ENCODE measurements at regions of chr7 and their contacts with region 1.

Region 1: DNA sequence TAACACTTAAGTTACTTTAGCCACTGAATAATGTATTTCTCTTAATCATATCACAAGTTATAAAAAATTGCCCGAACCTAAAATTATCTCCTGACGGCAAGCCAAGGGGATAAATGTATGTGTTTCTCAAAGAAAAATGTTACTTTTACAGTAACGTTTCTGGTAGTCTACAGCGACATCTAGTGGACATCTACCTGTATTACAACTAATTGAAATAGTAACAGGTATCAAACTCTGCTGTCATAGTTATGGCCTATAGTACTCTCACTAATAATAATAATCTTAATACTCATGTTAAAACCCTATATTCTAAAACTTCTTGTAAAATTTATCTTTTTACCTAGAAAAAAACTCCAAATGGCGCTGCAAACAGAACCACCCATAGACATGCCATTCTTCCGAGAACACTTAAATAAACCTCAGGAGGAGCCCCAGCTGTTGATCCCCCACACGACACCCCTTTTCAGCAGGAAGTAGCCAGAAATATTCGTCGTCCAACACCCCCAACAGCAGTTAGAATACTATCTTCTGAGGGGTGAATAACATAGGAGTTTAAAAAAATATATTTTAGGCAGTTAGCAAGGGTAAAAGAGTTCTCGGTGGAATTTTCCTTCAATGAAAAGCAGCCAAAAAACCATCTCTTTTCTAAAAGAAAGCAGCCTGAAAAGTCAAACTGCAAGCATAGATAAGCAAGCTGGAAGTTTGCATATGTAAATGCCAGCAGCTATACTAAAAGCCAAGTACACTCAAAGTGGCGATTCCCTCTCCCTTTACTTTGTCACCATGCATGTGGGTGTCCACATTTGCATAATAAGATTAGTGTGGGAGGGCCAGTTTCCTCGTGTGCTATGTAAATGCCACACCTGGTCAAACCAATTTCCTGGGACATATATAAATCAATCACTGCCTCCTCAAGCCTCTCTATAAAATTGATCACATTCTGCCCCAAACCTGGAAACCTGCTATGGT is 40.5 kb upstream of the ZNF107 start:
- DNase-seq: no peak
- H3K4me3 Mint-ChIP-seq: no peak overlapping the region
- H3K27ac Mint-ChIP-seq: no peak overlapping the region
- H3K4me1 Mint-ChIP-seq: no peaks in the 10 kb centered on the region
- H3K27me3 Mint-ChIP-seq: no peaks in the 10 kb centered on the region

Region 2: DNA sequence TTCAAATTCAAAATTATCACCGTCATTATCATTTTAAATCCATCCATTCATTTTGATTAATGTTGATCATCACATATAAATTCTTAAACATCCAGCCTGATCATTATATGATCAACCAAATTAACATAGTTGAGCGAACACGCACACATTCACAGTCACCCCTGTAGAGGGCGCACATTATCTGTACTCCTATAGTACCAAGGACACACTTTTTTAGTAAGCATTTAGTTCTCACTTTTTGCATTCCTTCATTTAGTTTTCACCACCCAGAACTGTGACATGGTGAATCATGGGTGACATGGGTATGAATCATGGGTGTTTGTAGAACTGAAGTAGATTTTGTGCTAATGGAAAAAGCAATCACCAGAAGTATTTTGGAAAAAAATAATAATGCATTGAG is 444.4 kb before region 1 on chr7:
- CTCF ChIA-PET with region 1: interaction called, 6 read pairs
- intact Hi-C with region 1: loop called (anchors 1 kb)
- DNase-seq: peak; percentile 38
- H3K4me3 Mint-ChIP-seq: no peak overlapping the region
- H3K27ac Mint-ChIP-seq: no peak overlapping the region
- H3K4me1 Mint-ChIP-seq: peaks cover 2% of the 10 kb centered on the region
- H3K27me3 Mint-ChIP-seq: peaks cover 12% of the 10 kb centered on the region

Region 3: DNA sequence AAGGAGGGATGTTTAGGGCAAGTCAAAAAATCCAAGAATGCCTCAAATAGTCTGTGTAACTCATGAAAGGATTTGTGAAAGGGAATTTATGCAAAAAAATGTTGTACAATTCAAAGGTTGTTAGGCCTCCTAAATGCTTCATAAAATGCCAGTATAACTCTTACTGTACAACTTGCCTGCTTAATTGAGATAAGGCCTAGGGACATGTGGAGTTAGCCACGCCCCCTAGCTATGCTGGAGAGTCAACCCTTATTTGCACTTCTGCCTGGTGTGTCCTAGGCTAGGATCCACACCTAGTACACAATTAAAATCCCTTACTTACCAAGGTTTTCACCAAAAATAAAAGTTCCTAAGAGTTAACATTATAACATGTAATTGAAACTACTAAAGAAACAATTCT is 139.8 kb before region 1 on chr7:
- CTCF ChIA-PET with region 1: no interaction called
- intact Hi-C with region 1: loop called (anchors 10 kb)
- DNase-seq: no peak
- H3K4me3 Mint-ChIP-seq: no peak overlapping the region
- H3K27ac Mint-ChIP-seq: no peak overlapping the region
- H3K4me1 Mint-ChIP-seq: no peaks in the 10 kb centered on the region
- H3K27me3 Mint-ChIP-seq: no peaks in the 10 kb centered on the region